ENCODE measurements at regions of chr17 and their contacts with region 1.

Region 1: DNA sequence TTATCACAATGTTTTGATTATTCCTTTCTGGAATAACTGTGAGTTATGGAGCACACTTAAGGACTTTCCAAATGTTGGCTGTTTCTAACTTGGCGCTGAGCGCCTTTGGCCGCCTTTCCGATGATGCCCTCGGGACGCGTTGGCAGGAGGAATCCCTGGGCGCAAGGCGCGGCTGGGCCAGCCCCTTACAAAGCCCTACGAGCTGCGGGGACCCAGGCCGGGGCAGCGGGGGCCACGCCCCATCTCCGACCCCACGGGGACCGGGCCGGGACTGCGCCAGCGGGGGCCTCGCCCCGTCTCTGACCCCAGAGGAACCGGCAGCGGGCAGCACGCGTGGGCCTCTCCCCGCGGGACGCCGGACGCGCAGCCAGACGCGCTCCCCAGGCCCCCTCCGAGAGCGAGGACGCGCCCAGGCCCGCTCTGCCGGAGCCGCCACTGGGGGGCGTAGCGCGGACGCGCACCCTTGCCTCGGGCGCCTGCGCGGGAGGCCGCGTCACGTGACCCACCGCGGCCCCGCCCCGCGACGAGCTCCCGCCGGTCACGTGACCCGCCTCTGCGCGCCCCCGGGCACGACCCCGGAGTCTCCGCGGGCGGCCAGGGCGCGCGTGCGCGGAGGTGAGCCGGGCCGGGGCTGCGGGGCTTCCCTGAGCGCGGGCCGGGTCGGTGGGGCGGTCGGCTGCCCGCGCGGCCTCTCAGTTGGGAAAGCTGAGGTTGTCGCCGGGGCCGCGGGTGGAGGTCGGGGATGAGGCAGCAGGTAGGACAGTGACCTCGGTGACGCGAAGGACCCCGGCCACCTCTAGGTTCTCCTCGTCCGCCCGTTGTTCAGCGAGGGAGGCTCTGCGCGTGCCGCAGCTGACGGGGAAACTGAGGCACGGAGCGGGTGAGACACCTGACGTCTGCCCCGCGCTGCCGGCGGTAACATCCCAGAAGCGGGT is at the start of gene GAA:
- DNase-seq: peak; percentile 87
- H3K4me3 Mint-ChIP-seq: peak within 1 kb of the TSS; percentile 80
- H3K27ac Mint-ChIP-seq: peak within 1 kb of the TSS; percentile 87
- H3K4me1 Mint-ChIP-seq: peaks cover 31% of the 10 kb centered on the region
- H3K27me3 Mint-ChIP-seq: peaks cover 4% of the 10 kb centered on the region
- total RNA-seq, gene GAA: 14.7 to 16.3 TPM

Region 2: DNA sequence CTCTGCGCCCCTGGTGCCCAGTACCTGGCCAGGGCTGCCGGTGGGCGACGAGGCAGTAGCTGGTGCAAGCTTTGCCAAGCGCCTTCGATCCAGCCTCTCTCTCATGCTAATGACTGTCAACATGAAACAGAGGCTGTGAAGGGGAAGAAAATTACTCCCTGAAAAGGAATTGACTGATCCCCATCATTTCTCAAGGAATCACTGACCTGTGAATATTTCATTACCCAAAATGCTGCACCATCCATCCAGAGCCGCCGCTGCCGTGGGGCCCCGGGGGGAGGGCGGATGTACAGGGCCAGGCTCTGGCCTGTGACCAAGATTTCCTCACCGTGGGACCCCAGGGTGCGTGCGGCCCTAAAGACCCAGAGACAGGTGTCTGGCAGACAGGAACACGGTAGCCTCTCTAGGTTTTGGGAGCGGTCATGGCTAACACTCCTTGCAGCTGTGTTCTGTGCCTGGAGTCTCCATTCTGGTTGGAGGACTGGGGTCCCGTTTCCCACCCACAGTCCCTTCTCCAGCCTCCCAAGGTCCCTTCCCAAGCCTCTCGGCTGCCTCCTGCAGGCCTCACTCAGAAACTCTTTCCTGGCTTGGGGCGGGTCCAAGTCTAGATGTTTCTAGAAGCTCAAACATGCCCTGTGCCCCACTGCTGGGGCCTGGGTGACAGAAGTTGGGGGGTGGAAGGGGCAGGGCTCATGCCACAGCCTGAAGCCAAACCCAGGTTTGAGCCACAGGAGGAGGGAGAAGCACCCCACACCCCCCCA is 953.4 kb before region 1 on chr17:
- CTCF ChIA-PET with region 1: no interaction called
- POLR2A ChIA-PET with region 1: no interaction called
- DNase-seq: no peak
- H3K4me3 Mint-ChIP-seq: no peak overlapping the region
- H3K27ac Mint-ChIP-seq: no peak overlapping the region
- H3K4me1 Mint-ChIP-seq: no peaks in the 10 kb centered on the region
- H3K27me3 Mint-ChIP-seq: no peaks in the 10 kb centered on the region

Region 3: DNA sequence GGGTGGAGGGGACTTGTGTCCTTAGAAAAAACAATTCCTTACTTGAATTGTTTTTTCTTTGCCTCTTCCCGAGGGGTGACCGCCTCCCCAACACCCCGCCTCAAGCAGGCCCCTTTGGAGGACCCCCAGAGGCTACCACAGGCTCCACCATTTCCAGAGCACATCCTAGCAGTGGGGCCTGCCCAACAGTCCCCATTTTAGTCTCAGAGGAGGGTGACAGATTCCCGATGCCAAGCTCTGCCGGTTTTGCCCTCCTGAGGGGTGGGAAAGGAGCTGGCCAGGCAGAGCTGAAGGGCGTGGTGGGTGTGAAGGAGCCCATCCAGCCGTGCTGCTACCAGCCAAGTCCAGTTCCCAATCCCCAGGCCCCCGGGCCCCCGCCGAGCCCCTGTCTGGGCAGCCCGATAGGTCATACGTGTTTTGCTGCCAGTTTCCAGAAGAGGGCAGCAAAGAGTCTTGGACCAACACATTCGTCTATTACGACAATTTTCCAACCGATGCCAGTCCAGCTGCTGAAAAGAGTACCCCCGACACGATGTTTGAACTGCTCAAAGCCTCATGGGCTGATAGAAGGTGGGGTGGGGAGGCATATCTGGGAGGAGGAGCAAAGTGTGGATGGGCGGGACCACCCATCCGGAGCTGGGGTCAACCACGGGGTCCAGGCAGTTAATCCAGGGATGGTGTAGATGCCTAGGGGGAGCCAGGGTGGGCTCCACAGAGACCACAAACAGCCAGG is 18.7 kb before region 1 on chr17:
- CTCF ChIA-PET with region 1: interaction called, 19 read pairs
- POLR2A ChIA-PET with region 1: no interaction called
- DNase-seq: peak; percentile 72
- H3K4me3 Mint-ChIP-seq: no peak overlapping the region
- H3K27ac Mint-ChIP-seq: no peak overlapping the region
- H3K4me1 Mint-ChIP-seq: peaks cover 5% of the 10 kb centered on the region
- H3K27me3 Mint-ChIP-seq: no peaks in the 10 kb centered on the region

Region 4: GRCh38 chr17:80087346-80088265 is 13.7 kb before region 1 on chr17:
- CTCF ChIA-PET with region 1: interaction called, 19 read pairs
- POLR2A ChIA-PET with region 1: no interaction called
- DNase-seq: no peak
- H3K4me3 Mint-ChIP-seq: no peak overlapping the region
- H3K27ac Mint-ChIP-seq: no peak overlapping the region
- H3K4me1 Mint-ChIP-seq: peaks cover 3% of the 10 kb centered on the region
- H3K27me3 Mint-ChIP-seq: no peaks in the 10 kb centered on the region

Region 5: GRCh38 chr17:80111327-80112014 is 10.2 kb after region 1 on chr17:
- CTCF ChIA-PET with region 1: interaction called, 11 read pairs
- POLR2A ChIA-PET with region 1: no interaction called
- DNase-seq: no peak
- H3K4me3 Mint-ChIP-seq: no peak overlapping the region
- H3K27ac Mint-ChIP-seq: no peak overlapping the region
- H3K4me1 Mint-ChIP-seq: no peaks in the 10 kb centered on the region
- H3K27me3 Mint-ChIP-seq: no peaks in the 10 kb centered on the region

Region 6: GRCh38 chr17:80141463-80142165 is 40.3 kb after region 1 on chr17:
- CTCF ChIA-PET with region 1: interaction called, 14 read pairs
- POLR2A ChIA-PET with region 1: no interaction called
- DNase-seq: no peak
- H3K4me3 Mint-ChIP-seq: no peak overlapping the region
- H3K27ac Mint-ChIP-seq: no peak overlapping the region
- H3K4me1 Mint-ChIP-seq: peaks cover 31% of the 10 kb centered on the region
- H3K27me3 Mint-ChIP-seq: no peaks in the 10 kb centered on the region